Left colon (tissue), 2 donors: ENCODE measurements at regions of chr22 and their contacts with region 1.

Region 1: GRCh38 chr22:34105461-34106062 is 185.3 kb upstream of the LARGE1 start:
- DNase-seq: peak; percentile 36 to 71
- ATAC-seq: peak; percentile 94

Region 2: GRCh38 chr22:33302049-33302545 is 803.5 kb before region 1 on chr22:
- intact Hi-C with region 1: loop called in 1 of 2 experiments (anchors 10 kb)
- DNase-seq: peak; percentile 67 to 89
- ATAC-seq: peak; percentile 98

Region 3: DNA sequence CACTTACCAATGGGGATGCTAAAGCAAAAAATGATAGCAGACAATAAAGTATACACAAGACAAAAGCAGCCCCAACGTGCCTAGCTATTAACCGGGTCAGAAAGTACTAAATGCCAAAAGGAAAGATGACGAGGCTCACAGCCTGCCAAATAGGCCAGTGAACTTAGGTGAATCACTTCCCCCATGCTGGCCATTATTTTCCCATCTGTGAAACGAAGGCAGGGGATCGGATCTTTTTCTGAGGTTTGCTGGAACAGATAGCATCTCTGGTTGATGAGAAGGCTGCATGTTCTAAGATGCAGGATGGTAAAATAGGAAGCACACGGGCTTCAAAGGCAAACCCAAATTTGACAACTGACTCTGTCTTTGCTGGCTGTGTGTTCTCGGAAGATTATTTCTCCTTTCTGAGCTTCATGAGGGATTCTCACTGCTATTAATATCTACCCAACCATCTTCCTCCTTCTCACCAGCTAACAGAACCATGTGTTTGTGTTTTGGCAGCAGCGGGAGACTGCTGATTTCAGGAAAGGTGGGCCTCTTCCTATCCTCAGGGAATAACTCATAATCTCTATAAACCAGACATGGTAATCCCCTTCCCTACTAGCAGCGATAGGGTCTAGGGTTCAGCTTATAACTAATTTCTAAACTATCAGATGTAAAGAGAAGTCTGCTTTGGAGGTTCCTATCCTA is 576.0 kb before region 1 on chr22:
- intact Hi-C with region 1: loop called in 1 of 2 experiments (anchors 10 kb)
- DNase-seq: no peak
- ATAC-seq: no peak

Region 4: DNA sequence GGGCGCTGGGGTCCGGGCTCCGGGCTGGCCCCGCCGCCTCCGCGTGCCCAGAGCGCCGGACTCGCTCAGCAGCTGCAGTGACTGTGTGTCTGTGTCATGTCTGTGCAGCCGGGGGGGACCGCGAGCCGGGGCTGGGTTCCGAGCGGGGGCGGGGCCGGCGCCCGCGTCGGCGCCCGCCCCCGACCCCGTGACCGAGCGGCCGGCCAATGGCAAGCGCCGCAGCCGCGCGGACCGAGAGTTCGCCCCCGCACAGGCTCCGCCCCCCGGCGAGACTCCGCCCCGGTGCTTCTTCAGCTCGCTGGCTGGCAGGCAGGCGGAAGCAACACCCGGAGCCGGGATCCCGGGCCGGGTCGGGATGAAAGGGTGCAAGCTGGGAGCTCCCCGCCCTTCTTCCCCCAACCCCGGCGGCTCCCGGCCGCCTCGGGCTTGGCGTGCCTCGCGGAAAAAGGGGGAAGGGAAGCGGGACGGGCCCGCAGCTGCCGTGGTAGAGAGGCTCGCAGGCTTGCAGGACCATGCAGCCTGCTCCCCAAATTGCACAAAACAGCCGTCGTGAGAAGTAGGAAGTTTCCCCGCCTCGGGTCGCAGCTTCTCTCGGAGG is 184.5 kb before region 1 on chr22:
- intact Hi-C with region 1: loop called in 1 of 2 experiments (anchors 5 kb)
- DNase-seq: peak; percentile 98 to 99
- ATAC-seq: peak; percentile 86